MCF 10A (cell line): ENCODE measurements at regions of chr9 and their contacts with region 1.

Region 1: GRCh38 chr9:98248737-98249474 is 6.5 kb downstream of the TBC1D2 start:
- DNase-seq: peak; percentile 99
- H3K4me3 Mint-ChIP-seq: peak overlapping the region; percentile 24
- H3K27ac Mint-ChIP-seq: peak overlapping the region; percentile 85
- H3K4me1 Mint-ChIP-seq: peaks cover 78% of the 10 kb centered on the region
- H3K27me3 Mint-ChIP-seq: no peaks in the 10 kb centered on the region
- CTCF ChIP-seq: no peak

Region 2: GRCh38 chr9:98222885-98223640 is 25.8 kb before region 1 on chr9:
- CTCF ChIA-PET with region 1: interaction called, 7 read pairs
- POLR2A ChIA-PET with region 1: interaction called, 91 read pairs
- intact Hi-C with region 1: loop called (anchors 1 kb)
- DNase-seq: peak; percentile 99
- H3K4me3 Mint-ChIP-seq: peak overlapping the region; percentile 4
- H3K27ac Mint-ChIP-seq: peak overlapping the region; percentile 77
- H3K4me1 Mint-ChIP-seq: peaks cover 26% of the 10 kb centered on the region
- H3K27me3 Mint-ChIP-seq: no peaks in the 10 kb centered on the region
- CTCF ChIP-seq: no peak

Region 3: GRCh38 chr9:98231770-98232478 is 17.0 kb before region 1 on chr9:
- CTCF ChIA-PET with region 1: interaction called, 5 read pairs
- POLR2A ChIA-PET with region 1: interaction called, 16 read pairs
- intact Hi-C with region 1: loop called (anchors 1 kb)
- DNase-seq: peak; percentile 84
- H3K4me3 Mint-ChIP-seq: no peak overlapping the region
- H3K27ac Mint-ChIP-seq: no peak overlapping the region
- H3K4me1 Mint-ChIP-seq: peaks cover 19% of the 10 kb centered on the region
- H3K27me3 Mint-ChIP-seq: no peaks in the 10 kb centered on the region
- CTCF ChIP-seq: no peak